ENCODE measurements at regions of chr4 and their contacts with region 1.

Region 1: GRCh38 chr4:151753041-151753440 is 7.8 kb downstream of the GATB start:
- H3K4me3 Mint-ChIP-seq: no peak overlapping the region
- H3K27ac Mint-ChIP-seq: no peak overlapping the region
- H3K4me1 Mint-ChIP-seq: no peaks in the 10 kb centered on the region
- H3K27me3 Mint-ChIP-seq: no peaks in the 10 kb centered on the region

Region 2: DNA sequence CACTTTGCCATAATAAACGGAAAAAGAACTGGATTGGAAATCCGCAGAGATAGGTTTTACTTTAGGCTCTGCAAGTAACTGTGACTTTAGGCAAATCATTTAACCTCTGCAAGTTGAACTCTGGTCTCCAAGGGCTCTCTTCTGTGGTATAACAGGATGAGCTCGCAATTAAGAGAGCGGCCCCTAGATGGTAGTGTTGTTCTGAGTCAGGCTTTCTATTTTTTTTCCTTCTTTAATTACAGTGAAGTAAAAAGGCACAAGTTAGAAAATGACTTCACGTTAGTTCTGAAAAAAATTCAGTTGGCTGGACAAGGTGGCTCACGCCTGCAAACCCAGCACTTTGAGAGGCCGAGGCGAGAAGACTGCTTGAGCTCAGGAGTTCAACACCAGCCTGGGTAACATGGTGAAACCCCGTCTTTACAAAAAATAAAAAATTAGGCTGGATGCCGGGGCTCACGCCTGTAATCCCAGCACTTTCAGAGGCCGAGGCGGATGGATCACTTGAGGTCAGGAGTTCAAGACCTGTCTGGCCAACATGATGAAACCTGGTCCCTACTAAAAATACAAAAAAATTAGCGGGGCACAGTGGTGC is 635.6 kb before region 1 on chr4:
- intact Hi-C with region 1: loop called (anchors 10 kb)
- H3K4me3 Mint-ChIP-seq: no peak overlapping the region
- H3K27ac Mint-ChIP-seq: no peak overlapping the region
- H3K4me1 Mint-ChIP-seq: no peaks in the 10 kb centered on the region
- H3K27me3 Mint-ChIP-seq: no peaks in the 10 kb centered on the region

Measured in dendritic cell treated with granulocyte-macrophage colony-stimulating factor and Interleukin-4, amounts not matched to agents 40 ng/mL and 50 ng/mL, for 4 days (primary cell).